Thyroid gland (tissue), 4 donors: ENCODE measurements at regions of chr19 and their contacts with region 1.

Region 1: DNA sequence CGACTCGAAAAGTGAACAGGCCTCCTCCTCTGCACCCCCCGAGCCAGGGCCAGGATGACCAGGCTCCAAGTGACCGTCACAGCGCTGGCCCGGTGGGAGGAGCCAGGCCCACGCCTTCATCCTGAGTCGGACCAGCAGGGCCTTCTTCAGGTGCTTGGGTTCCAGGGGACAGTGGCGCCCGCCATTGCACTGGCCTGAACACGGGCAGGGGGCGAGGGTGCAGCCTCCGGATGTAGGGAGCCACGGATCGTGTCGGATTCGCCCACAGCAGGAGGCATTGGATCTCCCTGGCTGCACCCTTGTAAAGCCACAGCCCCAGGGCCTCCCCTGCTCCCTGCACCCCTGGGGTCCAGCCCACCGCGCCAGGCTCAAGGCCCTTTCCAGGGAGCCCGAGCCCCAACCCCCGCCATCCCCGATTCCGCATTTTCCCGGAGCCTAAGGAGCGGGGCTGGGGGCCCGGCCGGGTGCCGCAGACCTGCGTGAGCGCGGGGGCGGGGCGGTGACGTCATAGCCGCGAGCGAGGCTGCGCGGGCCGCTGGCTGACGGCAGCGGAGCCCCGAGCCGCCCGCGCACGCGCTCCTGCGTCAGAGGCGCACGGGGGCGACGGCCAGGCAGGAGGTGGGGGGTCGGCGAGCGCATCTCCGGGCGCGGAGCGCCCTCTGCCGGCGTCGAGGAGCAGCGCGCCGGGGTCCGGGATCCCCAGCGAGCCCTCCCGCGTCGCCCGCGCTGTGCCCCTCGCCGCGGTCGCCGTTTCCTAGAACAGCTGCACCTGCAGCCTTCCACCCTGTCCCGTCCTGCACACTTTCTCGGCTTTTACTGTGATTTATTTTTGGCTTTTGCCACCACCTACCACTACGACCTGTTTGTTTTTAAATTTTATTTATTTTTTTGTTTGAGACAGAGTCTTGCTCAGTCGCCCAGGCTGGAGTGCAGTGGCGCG is 1.5 kb upstream of the ATP5F1D start:
- DNase-seq: peak; percentile 87 to 89
- H3K4me3 ChIP-seq: peak overlapping the region in 1 of 3 donors; percentile 23
- H3K27ac ChIP-seq: peak overlapping the region; percentile 90 to 94 (median 90)
- H3K4me1 ChIP-seq: peaks cover 44 to 62% of the 10 kb centered on the region in 2 donors
- H3K27me3 ChIP-seq: no peaks in the 10 kb centered on the region
- CTCF ChIP-seq: peak; percentile 35 to 98 (median 92)
- POLR2A ChIP-seq: peak in 1 of 2 donors; percentile 48

Region 2: DNA sequence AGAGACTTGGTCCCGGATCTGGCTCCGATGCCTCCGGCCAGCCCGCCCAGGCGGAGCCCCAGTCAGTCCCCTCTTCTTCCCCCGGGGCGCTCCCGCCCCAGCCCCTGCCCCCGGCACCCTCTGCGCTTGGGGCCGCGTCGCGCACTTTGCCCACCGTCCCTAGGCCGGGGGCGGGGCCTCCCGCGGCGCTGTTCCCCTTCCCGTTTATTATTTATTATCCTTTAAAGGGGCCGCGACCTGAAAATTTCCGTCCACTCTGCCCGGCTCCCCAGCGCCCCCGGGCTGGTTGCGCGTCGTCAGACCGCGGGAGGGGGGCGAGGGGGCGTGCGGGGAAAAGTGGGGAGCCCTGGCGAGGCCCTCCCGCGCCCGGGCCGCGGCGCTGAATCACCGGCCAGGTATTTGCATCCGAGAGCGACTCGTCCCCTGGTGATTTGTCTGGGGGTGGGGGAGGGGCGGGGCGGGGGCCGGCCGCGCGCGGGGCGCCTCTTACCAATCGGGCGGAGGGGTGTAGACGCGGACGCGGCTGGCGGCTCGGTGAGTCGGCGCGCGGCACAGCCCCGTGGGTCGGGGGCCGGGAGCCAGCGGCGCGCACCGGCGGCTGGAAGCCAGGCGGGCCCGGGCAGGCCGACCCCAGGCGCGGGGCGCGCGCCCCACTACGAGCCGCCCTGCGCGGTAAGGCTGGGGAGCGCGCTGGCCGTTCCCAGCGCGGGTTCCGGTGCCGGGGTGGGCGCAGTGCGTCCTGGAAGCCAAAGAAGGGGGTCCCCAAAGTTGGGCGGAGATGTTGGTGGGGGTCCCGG is 314.3 kb before region 1 on chr19 and contains the start of gene ARID3A:
- intact Hi-C with region 1: loop called (anchors 10 kb)
- DNase-seq: peak; percentile 78 to 81
- H3K4me3 ChIP-seq: peak within 1 kb of the TSS; percentile 39 to 95 (median 51)
- H3K27ac ChIP-seq: peak within 1 kb of the TSS; percentile 49 to 86 (median 73)
- H3K4me1 ChIP-seq: peaks cover 6 to 17% of the 10 kb centered on the region in 2 donors
- H3K27me3 ChIP-seq: peaks cover 5% of the 10 kb centered on the region
- CTCF ChIP-seq: no peak
- POLR2A ChIP-seq: peak in 1 of 2 donors; percentile 39
- total RNA-seq, gene ARID3A: 2.6 to 7.7 (median 3.9) TPM

Region 3: GRCh38 chr19:1266116-1266915 is 26.2 kb after region 1 on chr19:
- intact Hi-C with region 1: loop called (anchors 2 kb)
- DNase-seq: peak; percentile 69 to 74
- H3K4me3 ChIP-seq: peak overlapping the region in 1 of 3 donors; percentile 35
- H3K27ac ChIP-seq: peak overlapping the region; percentile 68 to 84 (median 78)
- H3K4me1 ChIP-seq: peaks cover 71 to 83% of the 10 kb centered on the region in 2 donors
- H3K27me3 ChIP-seq: no peaks in the 10 kb centered on the region
- CTCF ChIP-seq: no peak
- POLR2A ChIP-seq: no peak